CD4-positive, alpha-beta T cell (primary cell): ENCODE measurements at regions of chr12 and their contacts with region 1.

Region 1: GRCh38 chr12:122471324-122472226 is 29.2 kb downstream of the ZCCHC8 start:
- DNase-seq: peak in 5 of 14 experiments; percentile 4 to 81 (median 73)
- ATAC-seq: peak; percentile 85
- H3K4me3 ChIP-seq: no peak overlapping the region
- H3K4me3 Mint-ChIP-seq: no peak overlapping the region
- H3K27ac ChIP-seq: no peak overlapping the region
- H3K27ac Mint-ChIP-seq: peak overlapping the region; percentile 2
- H3K4me1 ChIP-seq: no peaks in the 10 kb centered on the region
- H3K4me1 Mint-ChIP-seq: peaks cover 9% of the 10 kb centered on the region
- H3K27me3 ChIP-seq: no peaks in the 10 kb centered on the region
- H3K27me3 Mint-ChIP-seq: no peaks in the 10 kb centered on the region
- CTCF ChIP-seq: peak; percentile 91

Region 2: GRCh38 chr12:122336015-122336946 is 135.3 kb before region 1 on chr12:
- CTCF ChIA-PET with region 1: interaction called, 4 read pairs
- POLR2A ChIA-PET with region 1: no interaction called
- intact Hi-C with region 1: loop called (anchors 1 to 5 kb)
- DNase-seq: peak; percentile 13 to 69 (median 34)
- ATAC-seq: no peak
- H3K4me3 ChIP-seq: no peak overlapping the region
- H3K4me3 Mint-ChIP-seq: no peak overlapping the region
- H3K27ac ChIP-seq: no peak overlapping the region
- H3K27ac Mint-ChIP-seq: no peak overlapping the region
- H3K4me1 ChIP-seq: no peaks in the 10 kb centered on the region
- H3K4me1 Mint-ChIP-seq: peaks cover 9% of the 10 kb centered on the region
- H3K27me3 ChIP-seq: no peaks in the 10 kb centered on the region
- H3K27me3 Mint-ChIP-seq: no peaks in the 10 kb centered on the region
- CTCF ChIP-seq: peak; percentile 66

Region 3: DNA sequence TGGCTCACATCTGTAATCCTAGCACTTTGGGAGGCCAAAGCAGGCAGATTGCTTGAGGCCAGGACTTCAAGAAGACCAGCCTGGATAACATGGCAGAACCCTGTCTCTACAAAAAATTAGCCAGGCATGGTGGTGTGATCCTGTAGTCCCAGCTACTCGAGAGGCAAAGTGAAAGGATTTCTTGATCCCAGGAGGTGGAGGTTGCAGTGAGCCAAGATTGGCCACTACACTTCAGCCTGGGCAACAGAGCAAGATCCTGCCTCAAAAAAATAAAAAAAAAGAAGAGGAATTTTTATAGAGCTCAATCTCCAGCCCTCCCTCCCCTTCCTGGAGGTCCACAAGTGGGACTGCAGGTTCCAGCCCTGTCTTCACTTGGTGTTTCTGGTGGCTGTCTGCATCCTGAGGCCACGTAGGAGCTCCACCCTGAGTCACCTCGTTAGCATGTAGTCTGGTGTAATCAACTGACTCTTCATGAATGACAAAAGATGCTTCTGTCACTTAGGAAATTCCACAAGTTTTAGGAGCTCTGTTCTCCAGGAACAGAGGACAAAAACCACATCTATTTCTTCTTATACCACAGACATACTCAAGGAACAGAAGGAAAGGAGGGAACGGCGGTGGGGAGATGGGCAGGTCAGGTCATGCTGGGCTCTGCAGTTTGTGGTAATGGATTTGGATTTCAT is 319.0 kb after region 1 on chr12:
- CTCF ChIA-PET with region 1: no interaction called
- POLR2A ChIA-PET with region 1: no interaction called
- intact Hi-C with region 1: no loop called
- DNase-seq: no peak
- ATAC-seq: no peak
- H3K4me3 ChIP-seq: no peak overlapping the region
- H3K4me3 Mint-ChIP-seq: no peak overlapping the region
- H3K27ac ChIP-seq: no peak overlapping the region
- H3K27ac Mint-ChIP-seq: no peak overlapping the region
- H3K4me1 ChIP-seq: peaks cover 7% of the 10 kb centered on the region
- H3K4me1 Mint-ChIP-seq: no peaks in the 10 kb centered on the region
- H3K27me3 ChIP-seq: no peaks in the 10 kb centered on the region
- H3K27me3 Mint-ChIP-seq: no peaks in the 10 kb centered on the region
- CTCF ChIP-seq: no peak